ENCODE measurements at regions of chr2 and their contacts with region 1.

Region 1: DNA sequence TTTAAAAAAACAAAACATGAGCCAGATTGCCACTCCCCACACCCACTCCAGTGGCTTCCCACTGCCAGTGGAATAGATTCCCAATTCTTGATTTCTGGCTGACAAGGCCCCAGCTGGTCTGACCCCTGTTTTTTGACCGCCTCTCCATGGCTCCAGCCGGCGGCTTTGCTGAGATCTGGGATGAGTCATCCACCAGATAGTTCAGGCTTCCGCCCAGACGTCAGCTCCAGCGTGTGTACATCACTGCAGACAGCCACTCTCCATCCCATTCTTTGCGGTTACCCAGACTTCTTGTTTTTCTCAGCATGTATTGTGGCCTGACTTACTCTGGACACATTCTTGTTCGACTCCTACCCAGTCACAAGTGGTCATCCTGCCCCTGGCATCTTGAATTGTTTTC is 227.9 kb downstream of the GBX2 start:
- DNase-seq: no peak
- H3K4me3 ChIP-seq: no peak overlapping the region
- H3K27ac ChIP-seq: no peak overlapping the region
- H3K4me1 ChIP-seq: peaks cover 0 to 9% (median 0%) of the 10 kb centered on the region in 4 donors
- H3K27me3 ChIP-seq: no peaks in the 10 kb centered on the region
- CTCF ChIP-seq: no peak
- EP300 ChIP-seq: no peak
- POLR2A ChIP-seq: no peak

Region 2: GRCh38 chr2:235780401-235780800 is 159.9 kb before region 1 on chr2:
- intact Hi-C with region 1: loop called (anchors 10 kb)
- DNase-seq: no peak
- H3K4me3 ChIP-seq: no peak overlapping the region
- H3K27ac ChIP-seq: no peak overlapping the region
- H3K4me1 ChIP-seq: peaks cover 0 to 7% (median 0%) of the 10 kb centered on the region in 4 donors
- H3K27me3 ChIP-seq: no peaks in the 10 kb centered on the region
- CTCF ChIP-seq: no peak
- EP300 ChIP-seq: no peak
- POLR2A ChIP-seq: no peak